H1 (cell line): ENCODE measurements at regions of chr17 and their contacts with region 1.

Region 1: DNA sequence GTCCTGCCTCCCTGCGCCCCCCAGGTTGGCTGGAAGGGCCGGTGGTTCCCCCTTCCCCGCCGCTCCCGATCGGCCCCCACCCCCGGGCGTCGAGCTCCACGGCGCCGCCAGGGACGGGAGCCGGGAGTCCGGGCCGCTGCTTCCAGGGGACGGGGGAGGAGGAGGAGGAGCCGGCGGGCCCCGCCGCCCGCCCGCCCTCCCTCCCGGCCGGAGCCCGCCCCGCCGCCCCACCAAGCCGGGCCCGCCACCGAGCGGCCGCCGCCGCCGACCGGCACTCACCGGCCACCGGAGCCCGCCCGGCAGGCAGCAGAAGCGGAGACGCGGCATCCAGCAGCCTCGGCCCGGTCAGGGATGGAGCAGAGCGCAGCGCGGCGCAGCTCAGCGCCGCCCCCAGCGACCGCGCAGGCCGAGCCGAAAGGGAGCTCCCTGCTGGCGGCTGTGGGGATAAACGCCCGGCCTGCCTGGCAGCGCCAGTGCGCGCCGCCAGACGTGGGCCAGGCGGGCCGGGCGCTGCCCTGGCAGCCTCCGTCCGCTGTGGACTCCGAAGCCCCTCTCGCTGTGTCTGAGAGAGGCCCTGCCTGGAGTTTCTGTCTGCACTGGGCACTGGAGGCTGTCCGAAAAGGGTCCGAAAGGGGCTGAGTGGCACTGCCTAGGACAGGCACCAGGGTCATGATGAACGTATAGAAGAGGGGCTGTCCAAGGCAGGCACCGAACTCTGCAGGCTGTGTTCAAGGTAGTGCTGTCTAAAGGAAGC is at the start of gene MYO18A:
- DNase-seq: peak; percentile 41 to 89
- H3K4me3 ChIP-seq: peak within 1 kb of the TSS; percentile 41 to 70 (median 63)
- H3K27ac ChIP-seq: no peak within 1 kb of the TSS; the same call in 1 of the 2 replicates
- H3K4me1 ChIP-seq: peaks cover 6 to 30% (median 16%) of the 10 kb centered on the region in 4 experiments
- H3K27me3 ChIP-seq: peaks cover 0 to 10% (median 5%) of the 10 kb centered on the region in 4 experiments; a peak in 3 of 7 replicates
- CTCF ChIP-seq: peak; percentile 85 to 99 (median 90)
- EP300 ChIP-seq: no peak
- POLR2A ChIP-seq: no peak
- RAD21 ChIP-seq: peak; percentile 40 to 74
- total RNA-seq, gene MYO18A: 36.6 and 43.8 TPM in 2 replicates

Region 2: GRCh38 chr17:29148790-29149430 is 31.3 kb before region 1 on chr17:
- CTCF ChIA-PET with region 1: interaction called, 731 read pairs
- POLR2A ChIA-PET with region 1: interaction called, 15 read pairs
- DNase-seq: peak; percentile 92 to 99
- H3K4me3 ChIP-seq: peak overlapping the region; percentile 7 to 57 (median 26); a peak in 5 of 8 replicates
- H3K27ac ChIP-seq: no peak overlapping the region
- H3K4me1 ChIP-seq: peaks cover 0 to 10% (median 6%) of the 10 kb centered on the region in 4 experiments; a peak in 6 of 7 replicates
- H3K27me3 ChIP-seq: no peaks in the 10 kb centered on the region
- CTCF ChIP-seq: peak; percentile 95
- EP300 ChIP-seq: no peak
- POLR2A ChIP-seq: peak in 1 of 2 experiments; percentile 67; a peak in 1 of 3 replicates
- RAD21 ChIP-seq: peak; percentile 97 to 98

Region 3: GRCh38 chr17:29155227-29155965 is 24.8 kb before region 1 on chr17:
- CTCF ChIA-PET with region 1: interaction called, 731 read pairs
- POLR2A ChIA-PET with region 1: interaction called, 25 read pairs
- DNase-seq: no peak
- H3K4me3 ChIP-seq: no peak overlapping the region
- H3K27ac ChIP-seq: peak overlapping the region; percentile 48; the same call in 1 of the 2 replicates
- H3K4me1 ChIP-seq: peaks cover 6 to 20% (median 15%) of the 10 kb centered on the region in 4 experiments
- H3K27me3 ChIP-seq: no peaks in the 10 kb centered on the region
- CTCF ChIP-seq: no peak
- EP300 ChIP-seq: no peak
- POLR2A ChIP-seq: no peak
- RAD21 ChIP-seq: no peak

Region 4: DNA sequence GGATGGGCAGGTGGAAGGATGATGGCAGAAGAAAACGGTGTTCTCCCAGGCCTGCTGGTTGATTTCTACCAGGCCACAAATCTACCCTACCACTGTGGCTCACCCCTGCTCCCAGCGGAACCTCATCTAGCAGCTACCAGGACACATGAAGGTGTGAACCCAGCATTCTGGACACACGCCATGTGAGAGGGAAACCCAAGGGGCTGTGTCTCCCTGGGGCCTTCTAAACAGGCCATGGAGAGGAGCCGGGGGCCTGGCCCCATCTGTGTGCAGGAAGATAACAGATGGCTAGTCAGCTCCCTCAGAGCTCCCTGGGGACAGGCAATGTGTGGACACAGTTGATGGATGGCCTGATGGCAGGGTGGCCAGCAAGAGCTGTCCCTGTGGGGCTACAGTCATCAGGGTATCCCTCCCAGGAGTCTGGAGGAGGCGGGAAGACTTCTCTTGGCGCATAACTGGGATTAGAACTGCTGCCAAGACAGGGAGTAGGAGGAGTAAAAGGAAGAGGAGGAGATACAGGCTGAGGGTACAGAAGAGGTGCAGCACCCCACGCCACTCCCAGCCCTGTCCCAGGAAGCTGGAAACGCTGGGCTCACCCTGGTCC is 17.4 kb before region 1 on chr17:
- CTCF ChIA-PET with region 1: interaction called, 731 read pairs
- POLR2A ChIA-PET with region 1: interaction called, 34 read pairs
- DNase-seq: no peak
- H3K4me3 ChIP-seq: no peak overlapping the region
- H3K27ac ChIP-seq: no peak overlapping the region
- H3K4me1 ChIP-seq: peaks cover 0 to 2% (median 1%) of the 10 kb centered on the region in 4 experiments; a peak in 2 of 7 replicates
- H3K27me3 ChIP-seq: no peaks in the 10 kb centered on the region
- CTCF ChIP-seq: no peak
- EP300 ChIP-seq: no peak
- POLR2A ChIP-seq: no peak
- RAD21 ChIP-seq: no peak

Region 5: DNA sequence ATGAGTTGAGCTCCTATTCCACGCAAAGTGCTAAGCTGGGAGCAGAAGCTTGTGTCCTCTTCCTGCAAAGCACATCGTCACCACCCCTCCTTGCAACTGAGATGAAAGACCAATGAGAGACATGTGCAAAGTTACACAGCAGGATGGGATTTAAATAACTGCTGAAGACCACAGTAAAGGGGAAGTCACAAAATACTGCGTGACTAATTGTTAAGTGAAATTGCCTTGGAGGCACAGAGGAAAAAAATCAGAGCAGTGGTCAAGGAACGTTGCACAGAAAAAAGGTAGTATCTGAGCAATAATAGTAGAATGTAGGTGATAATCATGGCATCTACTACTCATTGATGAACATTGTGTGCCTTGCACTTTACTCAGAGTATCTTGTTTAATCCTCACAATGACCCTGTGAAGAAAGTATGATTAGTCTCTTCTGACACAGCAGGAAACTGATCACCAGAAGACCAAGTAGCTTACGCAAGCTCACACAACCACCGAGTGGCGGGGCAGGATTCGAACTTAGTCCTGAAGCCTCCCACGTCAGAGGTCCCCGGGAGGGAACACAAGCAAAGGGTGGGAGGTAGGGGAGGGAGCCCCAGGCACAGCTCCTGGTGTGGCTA is 15.4 kb after region 1 on chr17:
- CTCF ChIA-PET with region 1: interaction called, 33 read pairs
- POLR2A ChIA-PET with region 1: interaction called, 3 read pairs
- DNase-seq: no peak
- H3K4me3 ChIP-seq: no peak overlapping the region
- H3K27ac ChIP-seq: no peak overlapping the region
- H3K4me1 ChIP-seq: peaks cover 0 to 3% (median 0%) of the 10 kb centered on the region in 4 experiments; a peak in 1 of 7 replicates
- H3K27me3 ChIP-seq: no peaks in the 10 kb centered on the region
- CTCF ChIP-seq: no peak
- EP300 ChIP-seq: no peak
- POLR2A ChIP-seq: no peak
- RAD21 ChIP-seq: no peak

Region 6: DNA sequence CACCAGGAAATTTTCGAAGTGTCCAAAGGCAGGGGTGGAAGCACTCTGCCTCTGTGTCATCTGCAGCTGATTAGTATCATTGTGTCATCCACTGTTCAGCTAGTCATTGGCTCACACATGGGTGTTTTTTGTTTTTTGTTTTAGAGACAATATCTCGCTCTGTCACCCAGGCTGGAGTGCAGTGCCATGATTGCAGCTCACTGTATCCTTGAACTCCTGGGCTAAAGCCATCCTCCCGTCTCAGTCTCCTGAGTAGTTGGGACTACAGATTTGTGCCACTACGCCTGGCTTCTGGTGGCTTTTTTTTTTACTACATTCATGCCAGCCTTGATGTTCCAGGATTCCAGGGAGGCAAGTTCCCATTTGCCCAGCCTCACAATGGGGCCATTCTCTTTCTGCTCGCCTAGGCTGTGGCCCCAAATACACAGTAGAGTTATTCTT is 32.5 kb after region 1 on chr17:
- CTCF ChIA-PET with region 1: interaction called, 42 read pairs
- POLR2A ChIA-PET with region 1: interaction called, 3 read pairs
- DNase-seq: no peak
- H3K4me3 ChIP-seq: no peak overlapping the region
- H3K27ac ChIP-seq: no peak overlapping the region
- H3K4me1 ChIP-seq: peaks cover 0 to 7% (median 3%) of the 10 kb centered on the region in 4 experiments; a peak in 6 of 7 replicates
- H3K27me3 ChIP-seq: no peaks in the 10 kb centered on the region
- CTCF ChIP-seq: no peak
- EP300 ChIP-seq: no peak
- POLR2A ChIP-seq: no peak
- RAD21 ChIP-seq: no peak

Region 7: GRCh38 chr17:29241015-29241963 is 61.1 kb after region 1 on chr17:
- CTCF ChIA-PET with region 1: interaction called, 17 read pairs
- POLR2A ChIA-PET with region 1: no interaction called
- DNase-seq: peak in 1 of 2 experiments; percentile 67
- H3K4me3 ChIP-seq: peak overlapping the region in 1 of 4 experiments; percentile 4; a peak in 2 of 8 replicates
- H3K27ac ChIP-seq: peak overlapping the region; percentile 51
- H3K4me1 ChIP-seq: peaks cover 7 to 13% (median 9%) of the 10 kb centered on the region in 4 experiments; a peak in 6 of 7 replicates
- H3K27me3 ChIP-seq: no peaks in the 10 kb centered on the region; a peak in 1 of 7 replicates
- CTCF ChIP-seq: no peak
- EP300 ChIP-seq: no peak
- POLR2A ChIP-seq: 0 out of 3 replicates have a peak, but pooled peaks of 1 of the 2 experiments have one; percentile 44
- RAD21 ChIP-seq: no peak